MCF 10A (cell line): ENCODE measurements at regions of chr17 and their contacts with region 1.

Region 1: DNA sequence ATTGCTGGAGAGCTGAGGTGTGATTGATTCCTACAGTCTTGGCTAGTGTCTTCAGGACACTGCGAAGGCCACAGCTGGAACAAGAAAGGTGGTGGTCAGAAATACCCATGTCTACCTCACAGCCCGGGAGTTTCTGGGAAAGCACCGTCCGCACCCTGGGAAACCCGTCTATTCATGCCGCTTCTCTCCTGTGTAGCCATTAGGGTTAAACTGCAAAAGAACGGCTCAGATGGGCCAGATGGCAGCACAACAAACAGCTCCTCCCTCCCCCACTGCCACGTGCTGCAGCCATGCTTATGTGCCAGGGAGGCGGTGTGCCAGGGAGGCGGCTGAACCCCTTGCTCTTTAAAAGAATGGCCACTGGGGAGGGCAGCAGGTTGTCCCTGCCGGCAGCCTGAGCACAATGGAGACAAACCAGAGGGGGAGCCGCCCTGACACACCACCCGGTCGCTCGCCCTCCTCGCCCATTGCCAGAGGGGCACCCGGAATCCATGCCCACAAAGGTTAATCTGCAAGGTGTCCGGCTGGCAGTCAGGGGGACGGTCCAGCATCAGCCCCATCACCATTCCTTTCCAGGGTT is 65.2 kb downstream of the CYTH1 start:
- DNase-seq: peak; percentile 76
- H3K4me3 Mint-ChIP-seq: peak overlapping the region; percentile 74
- H3K27ac Mint-ChIP-seq: peak overlapping the region; percentile 70
- H3K4me1 Mint-ChIP-seq: peaks cover 55% of the 10 kb centered on the region
- H3K27me3 Mint-ChIP-seq: no peaks in the 10 kb centered on the region
- CTCF ChIP-seq: no peak

Region 2: DNA sequence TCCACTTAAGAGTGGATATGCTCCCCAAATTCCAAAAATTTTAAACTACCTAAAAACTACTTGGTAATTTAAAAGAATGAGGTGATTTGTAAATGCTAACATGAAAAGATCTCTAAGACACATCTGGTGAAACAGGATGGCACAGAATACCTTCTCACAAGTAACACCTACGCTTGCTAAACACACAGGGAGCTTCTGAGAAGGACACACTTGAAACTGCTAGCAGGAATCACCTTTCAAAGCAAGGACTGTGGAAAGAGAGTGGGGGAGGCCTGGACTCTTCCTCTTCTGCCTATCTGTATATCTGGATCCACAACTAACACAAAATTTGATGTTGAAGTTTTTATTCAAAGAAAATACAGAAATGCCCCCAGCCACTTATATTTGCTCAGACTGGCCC is 12.7 kb after region 1 on chr17:
- CTCF ChIA-PET with region 1: interaction called, 16 read pairs
- POLR2A ChIA-PET with region 1: interaction called, 131 read pairs
- intact Hi-C with region 1: no loop called
- DNase-seq: no peak
- H3K4me3 Mint-ChIP-seq: no peak overlapping the region
- H3K27ac Mint-ChIP-seq: peak overlapping the region; percentile 28
- H3K4me1 Mint-ChIP-seq: peaks cover 26% of the 10 kb centered on the region
- H3K27me3 Mint-ChIP-seq: no peaks in the 10 kb centered on the region
- CTCF ChIP-seq: no peak

Region 3: DNA sequence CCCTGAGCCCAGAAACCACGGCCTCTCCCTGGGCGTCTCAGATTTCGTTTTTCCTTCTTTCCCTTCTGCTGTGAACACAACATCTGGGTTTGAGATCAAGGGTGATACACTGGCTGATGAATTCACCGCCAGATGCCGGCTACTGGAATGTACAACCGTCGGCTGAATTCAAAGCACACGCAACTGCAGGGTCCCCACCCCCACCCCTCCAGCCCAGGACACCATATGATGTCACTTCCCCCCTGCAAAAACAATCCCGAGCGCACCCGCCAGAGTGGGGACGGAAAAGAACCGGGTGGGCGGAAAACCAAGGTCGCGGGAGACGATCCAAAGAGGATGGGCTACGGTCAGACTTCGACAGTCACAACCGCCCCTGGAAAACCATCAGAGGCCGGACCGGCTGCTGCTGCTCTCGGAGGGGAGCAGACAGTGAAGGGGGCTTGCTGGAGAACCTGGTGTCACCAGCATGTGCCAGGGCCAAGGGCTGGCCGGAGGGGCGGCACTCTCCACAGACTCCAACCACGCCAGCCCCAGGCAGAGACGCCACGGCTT is 162.8 kb after region 1 on chr17:
- CTCF ChIA-PET with region 1: no interaction called
- POLR2A ChIA-PET with region 1: no interaction called
- intact Hi-C with region 1: no loop called
- DNase-seq: no peak
- H3K4me3 Mint-ChIP-seq: no peak overlapping the region
- H3K27ac Mint-ChIP-seq: peak overlapping the region; percentile 44
- H3K4me1 Mint-ChIP-seq: peaks cover 24% of the 10 kb centered on the region
- H3K27me3 Mint-ChIP-seq: no peaks in the 10 kb centered on the region
- CTCF ChIP-seq: no peak